ENCODE measurements at regions of chr9 and their contacts with region 1.

Region 1: GRCh38 chr9:134641173-134641985 is at the start of gene COL5A1:
- DNase-seq: peak; percentile 91
- ATAC-seq: peak; percentile 79
- H3K4me3 ChIP-seq: peak within 1 kb of the TSS; percentile 84
- H3K27ac ChIP-seq: peak within 1 kb of the TSS; percentile 99
- H3K4me1 ChIP-seq: peaks cover 22% of the 10 kb centered on the region
- H3K27me3 ChIP-seq: no peaks in the 10 kb centered on the region
- CTCF ChIP-seq: no peak; the same call in 1 of the 2 replicates
- POLR2A ChIP-seq: peak; percentile 96
- RAD21 ChIP-seq: no peak; the same call in 1 of the 2 replicates
- total RNA-seq, gene COL5A1: 19.2 and 21.1 TPM in 2 replicates

Region 2: DNA sequence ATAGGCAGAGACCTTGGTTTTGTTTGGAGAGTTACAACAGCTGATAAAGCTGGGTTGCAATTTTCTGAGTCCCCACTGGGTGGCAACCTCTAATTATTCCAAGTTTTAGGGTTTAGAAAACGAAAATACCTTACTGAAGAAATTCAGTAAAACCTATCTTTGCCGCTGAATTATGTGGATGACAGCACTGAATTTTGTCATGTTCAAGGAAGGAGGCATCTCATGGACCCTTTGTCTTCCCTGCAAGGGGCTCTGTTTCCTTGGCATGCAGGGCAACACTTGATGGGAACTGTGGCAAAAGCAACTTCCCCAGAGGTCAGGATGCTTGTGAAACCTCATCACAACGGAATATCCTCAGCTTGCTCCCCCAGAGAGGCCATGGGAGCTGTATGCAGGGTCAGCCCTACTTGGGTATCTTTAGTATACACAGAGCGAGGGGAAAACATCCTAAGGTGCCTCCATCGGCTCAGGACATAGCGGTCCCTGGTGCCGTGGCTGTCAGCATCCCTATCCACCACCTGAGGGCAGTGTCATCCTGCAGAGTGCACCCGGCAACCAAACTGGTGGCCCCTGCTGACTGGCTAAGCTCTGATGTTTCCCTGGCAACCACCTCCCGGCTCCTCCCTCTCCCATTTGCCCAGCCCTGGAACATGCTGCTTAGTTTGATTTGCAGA is 192.0 kb before region 1 on chr9:
- CTCF ChIA-PET with region 1: interaction called, 3 read pairs
- POLR2A ChIA-PET with region 1: no interaction called
- dilution Hi-C with region 1: no loop called
- in situ Hi-C with region 1: loop called (anchors 5 kb)
- intact Hi-C with region 1: loop called (anchors 1 kb)
- DNase-seq: peak; percentile 94
- ATAC-seq: peak; percentile 100
- H3K4me3 ChIP-seq: no peak overlapping the region
- H3K27ac ChIP-seq: no peak overlapping the region
- H3K4me1 ChIP-seq: peaks cover 2% of the 10 kb centered on the region; the same call in 1 of the 2 replicates
- H3K27me3 ChIP-seq: no peaks in the 10 kb centered on the region
- CTCF ChIP-seq: peak; percentile 99
- POLR2A ChIP-seq: peak; percentile 61
- RAD21 ChIP-seq: peak; percentile 100

Region 3: GRCh38 chr9:134492281-134492691 is 149.1 kb before region 1 on chr9:
- CTCF ChIA-PET with region 1: no interaction called
- POLR2A ChIA-PET with region 1: no interaction called
- dilution Hi-C with region 1: no loop called
- in situ Hi-C with region 1: no loop called
- intact Hi-C with region 1: loop called (anchors 2 kb)
- DNase-seq: peak; percentile 91
- ATAC-seq: peak; percentile 88
- H3K4me3 ChIP-seq: no peak overlapping the region
- H3K27ac ChIP-seq: peak overlapping the region; percentile 41; the same call in 1 of the 2 replicates
- H3K4me1 ChIP-seq: peaks cover 22% of the 10 kb centered on the region
- H3K27me3 ChIP-seq: peaks cover 5% of the 10 kb centered on the region
- CTCF ChIP-seq: no peak
- POLR2A ChIP-seq: no peak
- RAD21 ChIP-seq: no peak; the same call in 1 of the 2 replicates

Region 4: DNA sequence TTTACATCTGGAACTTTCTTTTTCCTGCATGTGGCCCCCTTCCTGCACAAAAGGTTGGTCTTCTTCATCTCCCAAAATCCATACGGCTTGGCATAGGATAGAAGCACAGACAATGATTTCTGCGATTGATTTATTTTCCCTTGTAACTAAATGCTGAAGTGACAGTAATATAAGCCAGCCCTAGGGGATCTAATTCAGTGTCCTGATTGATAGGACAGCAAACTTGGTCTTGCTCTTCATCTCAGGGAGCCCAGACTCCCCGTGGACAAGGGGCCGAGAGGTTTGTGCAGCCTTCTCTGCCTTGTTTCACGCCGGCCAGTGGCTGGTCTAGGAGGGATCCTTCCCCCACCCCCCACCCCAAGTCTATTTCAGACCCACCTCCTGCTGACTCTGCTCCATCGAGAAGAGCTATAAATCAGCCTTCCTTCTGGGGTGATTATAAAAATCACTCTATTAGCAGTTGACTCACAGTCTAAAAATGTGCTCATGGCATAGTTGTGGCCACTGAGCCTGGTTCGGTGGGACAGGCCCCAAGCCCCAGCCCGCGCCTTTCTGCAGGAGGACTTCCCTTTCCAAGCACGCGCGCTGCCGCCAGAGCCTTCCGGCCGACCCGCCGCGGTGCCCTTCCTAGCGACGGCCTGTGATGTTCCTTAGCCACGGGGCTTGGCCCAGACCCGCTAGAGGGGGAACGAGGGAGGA is 89.6 kb before region 1 on chr9:
- CTCF ChIA-PET with region 1: no interaction called
- POLR2A ChIA-PET with region 1: no interaction called
- dilution Hi-C with region 1: no loop called
- in situ Hi-C with region 1: no loop called
- intact Hi-C with region 1: loop called (anchors 5 kb)
- DNase-seq: peak; percentile 82
- ATAC-seq: peak; percentile 91
- H3K4me3 ChIP-seq: no peak overlapping the region
- H3K27ac ChIP-seq: peak overlapping the region; percentile 2
- H3K4me1 ChIP-seq: peaks cover 32% of the 10 kb centered on the region
- H3K27me3 ChIP-seq: no peaks in the 10 kb centered on the region
- CTCF ChIP-seq: no peak
- POLR2A ChIP-seq: no peak
- RAD21 ChIP-seq: no peak; the same call in 1 of the 2 replicates

Region 5: GRCh38 chr9:134602547-134603309 is 38.7 kb before region 1 on chr9:
- CTCF ChIA-PET with region 1: no interaction called
- POLR2A ChIA-PET with region 1: interaction called, 13 read pairs
- dilution Hi-C with region 1: no loop called
- in situ Hi-C with region 1: no loop called
- intact Hi-C with region 1: loop called (anchors 2 kb)
- DNase-seq: peak; percentile 99
- ATAC-seq: peak; percentile 91
- H3K4me3 ChIP-seq: no peak overlapping the region
- H3K27ac ChIP-seq: peak overlapping the region; percentile 95
- H3K4me1 ChIP-seq: peaks cover 15% of the 10 kb centered on the region
- H3K27me3 ChIP-seq: no peaks in the 10 kb centered on the region
- CTCF ChIP-seq: no peak
- POLR2A ChIP-seq: no peak
- RAD21 ChIP-seq: peak; percentile 31; the same call in 1 of the 2 replicates

Region 6: GRCh38 chr9:134738869-134739659 is 97.7 kb after region 1 on chr9:
- CTCF ChIA-PET with region 1: no interaction called
- POLR2A ChIA-PET with region 1: no interaction called
- dilution Hi-C with region 1: no loop called
- in situ Hi-C with region 1: no loop called
- intact Hi-C with region 1: loop called (anchors 10 kb)
- DNase-seq: peak; percentile 49
- ATAC-seq: peak; percentile 75
- H3K4me3 ChIP-seq: no peak overlapping the region
- H3K27ac ChIP-seq: no peak overlapping the region
- H3K4me1 ChIP-seq: peaks cover 9% of the 10 kb centered on the region
- H3K27me3 ChIP-seq: no peaks in the 10 kb centered on the region
- CTCF ChIP-seq: peak; percentile 73
- POLR2A ChIP-seq: no peak
- RAD21 ChIP-seq: peak; percentile 74

Measured in IMR-90 (cell line).